AG04449 (cell line): ENCODE measurements at regions of chr3 and their contacts with region 1.

Region 1: GRCh38 chr3:134754768-134755559 is 40.1 kb upstream of the EPHB1 start:
- DNase-seq: no peak
- H3K4me3 ChIP-seq: no peak overlapping the region
- CTCF ChIP-seq: peak; percentile 87

Region 2: GRCh38 chr3:134618478-134619300 is 136.3 kb before region 1 on chr3:
- CTCF ChIA-PET with region 1: interaction called, 17 read pairs
- POLR2A ChIA-PET with region 1: no interaction called
- DNase-seq: no peak
- H3K4me3 ChIP-seq: no peak overlapping the region
- CTCF ChIP-seq: no peak

Region 3: DNA sequence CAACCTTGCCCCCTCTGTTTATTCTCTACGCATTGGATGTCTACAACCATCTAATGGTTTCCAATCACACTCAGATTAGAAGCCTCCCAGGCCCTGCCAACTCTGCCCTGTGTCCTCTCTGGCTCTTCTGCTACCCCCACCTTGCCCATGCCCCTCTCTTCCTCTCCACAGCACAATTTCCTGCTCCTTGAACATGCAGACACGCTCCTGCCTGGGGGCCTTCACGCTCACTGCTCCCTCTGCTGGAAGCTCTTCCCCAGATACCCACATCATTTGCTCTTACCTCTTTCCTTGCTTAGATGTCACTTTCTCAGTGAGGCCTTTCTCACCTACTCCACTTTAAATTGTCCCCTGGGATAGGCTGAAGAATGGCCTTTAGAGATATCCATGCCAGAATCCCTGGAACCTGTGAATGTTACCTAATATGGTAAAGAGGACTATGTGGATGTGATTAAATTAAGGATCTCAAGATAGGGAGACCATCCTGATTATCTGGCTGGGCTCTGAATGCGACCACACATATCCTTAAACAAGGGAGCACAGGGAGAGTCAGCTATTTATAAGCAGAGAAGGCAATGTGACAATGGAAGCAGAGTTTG is 114.0 kb before region 1 on chr3:
- CTCF ChIA-PET with region 1: interaction called, 51 read pairs
- POLR2A ChIA-PET with region 1: no interaction called
- DNase-seq: no peak
- H3K4me3 ChIP-seq: no peak overlapping the region
- CTCF ChIP-seq: peak; percentile 69

Region 4: DNA sequence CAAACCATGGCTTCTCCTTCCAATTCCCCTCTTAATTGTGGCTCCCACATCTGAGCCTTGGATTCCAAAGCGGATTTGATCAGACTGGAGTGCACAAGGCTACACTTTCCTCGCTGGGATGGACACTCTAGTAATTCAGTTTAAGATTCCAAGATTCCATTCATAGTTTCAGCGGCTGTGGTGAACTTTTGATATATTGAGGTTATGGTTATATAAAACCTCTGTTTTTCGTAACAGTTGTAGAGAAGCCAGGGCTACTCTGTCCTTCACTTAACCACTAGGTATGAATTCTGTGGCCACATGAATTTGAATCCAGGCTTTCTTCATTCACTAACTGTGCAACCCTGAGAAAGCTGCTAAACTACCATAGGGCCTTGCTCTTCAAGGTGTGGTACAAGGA is 36.2 kb before region 1 on chr3:
- CTCF ChIA-PET with region 1: interaction called, 15 read pairs
- POLR2A ChIA-PET with region 1: no interaction called
- DNase-seq: no peak
- H3K4me3 ChIP-seq: no peak overlapping the region
- CTCF ChIP-seq: no peak

Region 5: DNA sequence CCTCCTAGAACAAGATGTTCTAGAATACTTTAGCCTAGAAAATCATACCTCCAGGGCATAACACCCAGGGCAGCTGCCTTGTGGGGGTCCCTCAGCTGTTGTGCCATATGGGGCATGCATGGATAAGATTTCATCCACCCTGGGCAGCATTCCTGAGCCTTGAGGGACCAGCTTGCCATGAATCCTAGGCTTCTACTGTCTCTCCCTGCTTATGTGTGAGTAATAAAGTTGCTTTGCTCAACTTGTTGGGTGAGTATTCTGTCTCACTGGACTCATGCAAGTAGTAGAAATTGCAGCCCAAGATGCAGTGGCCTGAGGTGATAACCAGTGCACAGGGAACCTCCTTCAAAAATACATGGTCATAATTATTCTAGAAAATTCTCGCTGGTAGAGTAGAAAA is 12.0 kb before region 1 on chr3:
- CTCF ChIA-PET with region 1: interaction called, 22 read pairs
- POLR2A ChIA-PET with region 1: no interaction called
- DNase-seq: no peak
- H3K4me3 ChIP-seq: no peak overlapping the region
- CTCF ChIP-seq: no peak

Region 6: DNA sequence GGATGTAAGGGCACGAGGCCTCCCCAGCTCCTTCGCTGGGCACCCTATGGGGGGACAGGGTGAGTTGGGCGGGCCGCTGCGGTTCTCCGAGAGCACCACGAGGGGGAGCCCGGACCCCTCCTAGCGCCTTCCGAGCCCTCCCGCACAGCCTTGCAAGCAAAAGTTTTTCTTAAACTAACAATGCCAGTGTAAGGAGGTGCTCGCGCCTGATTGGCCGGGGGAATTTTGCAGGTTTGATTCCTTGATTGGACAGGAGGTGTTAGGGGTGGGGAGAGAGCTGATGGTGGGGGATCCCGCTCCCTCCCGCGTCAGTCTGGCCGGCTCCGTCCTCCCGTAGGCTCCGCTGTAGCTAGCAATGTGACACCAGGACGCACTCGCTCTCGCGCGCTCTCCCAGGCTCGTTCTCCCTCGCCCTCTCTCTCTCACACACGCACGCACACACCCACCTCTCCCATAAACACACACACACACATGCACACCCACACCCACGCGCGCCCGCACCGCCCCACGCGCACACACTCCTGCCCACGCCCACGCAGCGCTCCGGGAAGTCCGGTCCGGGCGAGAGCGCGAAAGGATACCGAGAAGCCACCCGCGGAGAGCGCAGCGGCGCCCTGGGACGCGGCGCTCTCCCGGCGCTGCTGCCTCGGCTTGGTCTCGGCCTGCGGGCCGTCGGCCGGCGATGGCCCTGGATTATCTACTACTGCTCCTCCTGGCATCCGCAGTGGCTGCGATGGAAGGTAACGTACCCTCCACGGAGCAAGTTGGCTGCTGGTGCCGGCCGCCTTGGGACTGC is 40.2 kb after region 1 on chr3 and contains the start of gene EPHB1:
- CTCF ChIA-PET with region 1: interaction called, 25 read pairs
- POLR2A ChIA-PET with region 1: no interaction called
- DNase-seq: peak; percentile 74
- H3K4me3 ChIP-seq: peak within 1 kb of the TSS; percentile 64
- CTCF ChIP-seq: peak; percentile 94

Region 7: GRCh38 chr3:135762188-135762856 is 1007.4 kb after region 1 on chr3:
- CTCF ChIA-PET with region 1: no interaction called
- POLR2A ChIA-PET with region 1: no interaction called
- DNase-seq: no peak
- H3K4me3 ChIP-seq: no peak overlapping the region
- CTCF ChIP-seq: no peak